Activated B cell treated with CpG ODN at 0.5 μM for 24 hours (primary cell): ENCODE measurements at regions of chr4 and their contacts with region 1.

Region 1: DNA sequence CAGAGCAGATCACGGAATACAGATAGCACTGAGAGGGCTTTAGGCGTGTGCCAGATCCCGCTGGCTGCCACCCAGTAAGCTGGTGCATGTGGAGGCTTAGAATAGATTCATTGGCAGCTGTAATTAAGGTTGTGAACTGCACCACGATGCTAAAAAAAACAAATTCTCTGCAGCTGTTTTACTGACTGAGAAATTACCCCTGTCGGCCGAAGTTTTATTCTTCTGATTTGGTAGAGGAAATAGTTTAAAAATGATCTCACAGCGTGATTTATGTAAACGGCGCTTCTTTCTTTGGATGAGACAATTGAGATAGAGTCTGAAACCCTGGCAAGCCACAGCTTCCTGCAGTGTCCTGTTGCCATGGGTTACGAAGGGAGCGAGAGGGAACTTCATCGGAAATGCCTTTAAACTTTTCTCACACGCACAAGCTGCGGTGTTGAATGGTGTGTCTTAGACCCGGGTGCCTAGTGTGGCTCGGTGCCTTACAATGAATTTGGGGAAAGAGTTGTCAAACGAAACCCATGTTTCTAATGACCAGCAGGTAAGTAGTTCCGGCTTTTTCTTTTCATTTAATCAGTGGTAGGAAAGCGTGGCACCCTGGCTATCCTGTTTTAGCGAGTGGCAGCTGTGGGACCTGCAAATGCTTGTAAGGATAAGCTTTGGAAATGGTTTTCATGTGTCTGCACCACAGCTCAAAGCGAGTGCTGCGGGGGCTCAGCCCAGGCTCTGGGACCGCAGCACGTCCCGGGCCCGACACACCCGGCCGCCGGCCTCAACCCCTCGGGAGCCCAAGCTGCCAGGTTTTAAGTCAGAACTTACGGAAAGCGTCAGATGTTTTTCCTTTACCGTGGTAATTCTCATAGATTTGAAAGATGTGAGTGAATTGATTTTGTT is 71.7 kb upstream of the HGFAC start:
- DNase-seq: no peak
- ATAC-seq: no peak
- H3K4me3 Mint-ChIP-seq: peak overlapping the region; percentile 64
- H3K27ac Mint-ChIP-seq: no peak overlapping the region
- H3K4me1 Mint-ChIP-seq: peaks cover 38% of the 10 kb centered on the region
- H3K27me3 Mint-ChIP-seq: peaks cover 11% of the 10 kb centered on the region
- CTCF ChIP-seq: no peak

Region 2: DNA sequence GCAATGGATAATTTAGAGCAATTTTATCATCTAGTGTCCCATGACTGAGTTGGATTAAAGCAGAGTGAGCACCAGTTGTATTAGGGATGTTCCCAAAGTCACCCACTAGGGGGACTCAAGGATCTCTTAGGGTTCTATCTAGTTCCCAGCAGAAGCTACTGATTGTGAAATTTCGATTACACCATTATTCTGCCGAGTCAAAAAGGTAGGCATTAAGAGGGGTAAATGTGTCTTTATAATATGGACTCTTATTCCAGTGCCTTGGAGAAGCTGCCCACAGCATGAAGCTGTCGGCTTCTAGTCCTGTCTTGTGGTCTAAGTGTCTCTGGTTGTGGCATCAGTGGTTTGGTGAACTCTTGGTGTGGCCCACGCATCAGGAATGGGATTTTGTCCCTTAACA is 23.9 kb before region 1 on chr4:
- CTCF ChIA-PET with region 1: interaction called, 15 read pairs
- POLR2A ChIA-PET with region 1: no interaction called
- intact Hi-C with region 1: loop called (anchors 1 kb)
- DNase-seq: no peak
- ATAC-seq: peak; percentile 99
- H3K4me3 Mint-ChIP-seq: no peak overlapping the region
- H3K27ac Mint-ChIP-seq: no peak overlapping the region
- H3K4me1 Mint-ChIP-seq: peaks cover 4% of the 10 kb centered on the region
- H3K27me3 Mint-ChIP-seq: no peaks in the 10 kb centered on the region
- CTCF ChIP-seq: peak; percentile 18

Region 3: DNA sequence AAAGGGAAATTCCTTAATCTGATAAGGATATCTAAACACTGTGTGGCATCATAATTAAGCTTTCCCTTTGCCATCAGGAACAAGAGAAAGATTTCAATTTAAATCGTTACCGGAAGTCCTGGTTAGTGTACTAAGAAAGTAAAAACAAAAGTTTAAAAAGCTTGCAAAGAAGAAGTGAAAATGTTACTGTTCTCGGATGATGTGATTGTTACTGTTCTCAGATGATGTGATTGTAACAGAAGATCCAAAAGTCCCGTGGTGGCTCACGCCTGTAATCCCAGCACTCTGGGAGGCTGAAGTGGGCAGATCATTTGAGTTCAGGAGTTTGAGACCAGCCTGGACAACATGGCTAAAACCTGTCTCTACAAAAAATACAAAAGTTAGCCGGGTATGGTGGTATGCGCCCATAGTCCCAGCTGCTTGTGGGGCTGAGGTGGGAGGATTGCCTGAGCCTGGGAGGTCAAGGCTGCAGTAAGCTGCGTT is 14.7 kb before region 1 on chr4:
- CTCF ChIA-PET with region 1: interaction called, 4 read pairs
- POLR2A ChIA-PET with region 1: interaction called, 12 read pairs
- intact Hi-C with region 1: loop called (anchors 2 kb)
- DNase-seq: no peak
- ATAC-seq: peak; percentile 89
- H3K4me3 Mint-ChIP-seq: peak overlapping the region; percentile 67
- H3K27ac Mint-ChIP-seq: peak overlapping the region; percentile 91
- H3K4me1 Mint-ChIP-seq: peaks cover 44% of the 10 kb centered on the region
- H3K27me3 Mint-ChIP-seq: no peaks in the 10 kb centered on the region
- CTCF ChIP-seq: no peak

Region 4: DNA sequence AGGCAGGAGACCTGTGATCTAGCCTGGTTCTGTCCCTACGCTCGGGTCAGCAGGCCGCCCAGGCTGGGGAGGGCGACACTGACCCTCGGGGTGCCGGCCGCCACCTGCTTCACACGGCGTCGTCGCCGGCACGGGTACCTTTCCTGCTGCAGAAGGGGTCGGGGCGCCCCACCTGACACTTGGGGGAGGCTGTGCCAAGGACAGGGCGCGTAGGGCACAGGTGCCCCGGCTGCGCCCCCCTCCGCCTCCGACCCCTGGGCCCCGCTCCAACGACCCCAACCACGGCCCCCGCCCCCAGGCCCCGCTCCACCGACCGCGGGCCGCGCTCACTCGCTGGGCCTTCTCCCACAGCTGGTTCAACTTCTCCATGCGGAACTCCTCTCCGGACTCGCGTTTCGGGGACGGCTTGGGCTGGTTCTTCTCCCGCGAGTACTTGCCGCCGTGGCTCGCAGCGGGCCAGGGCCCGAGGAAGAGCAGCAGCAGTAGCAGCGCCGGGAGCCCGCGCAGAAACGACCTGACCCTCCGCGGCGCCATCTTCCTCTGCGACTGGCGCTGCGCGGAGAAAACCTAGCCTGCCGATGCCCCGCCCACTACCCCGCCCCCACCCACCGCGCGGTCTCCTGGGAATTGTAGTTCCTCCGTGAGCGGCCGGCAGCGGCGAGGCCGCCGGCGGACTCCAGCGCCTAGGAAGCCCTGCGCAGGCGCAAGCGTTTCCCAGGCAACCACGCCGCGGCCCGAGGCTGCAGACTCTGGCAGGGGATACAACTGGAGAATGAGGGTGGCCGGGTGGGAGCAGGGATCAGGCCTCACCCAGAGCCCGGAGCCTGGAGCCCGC is 162.1 kb after region 1 on chr4 and contains the start of gene LRPAP1:
- CTCF ChIA-PET with region 1: no interaction called
- POLR2A ChIA-PET with region 1: no interaction called
- intact Hi-C with region 1: loop called (anchors 2 kb)
- DNase-seq: peak; percentile 91
- ATAC-seq: peak; percentile 89
- H3K4me3 Mint-ChIP-seq: peak within 1 kb of the TSS; percentile 99
- H3K27ac Mint-ChIP-seq: peak within 1 kb of the TSS; percentile 94
- H3K4me1 Mint-ChIP-seq: peaks cover 42% of the 10 kb centered on the region
- H3K27me3 Mint-ChIP-seq: no peaks in the 10 kb centered on the region
- CTCF ChIP-seq: no peak
- total RNA-seq, gene LRPAP1: 60.9 and 62.9 TPM in 2 replicates